Caco-2 (cell line): ENCODE measurements at regions of chr20 and their contacts with region 1.

Region 1: DNA sequence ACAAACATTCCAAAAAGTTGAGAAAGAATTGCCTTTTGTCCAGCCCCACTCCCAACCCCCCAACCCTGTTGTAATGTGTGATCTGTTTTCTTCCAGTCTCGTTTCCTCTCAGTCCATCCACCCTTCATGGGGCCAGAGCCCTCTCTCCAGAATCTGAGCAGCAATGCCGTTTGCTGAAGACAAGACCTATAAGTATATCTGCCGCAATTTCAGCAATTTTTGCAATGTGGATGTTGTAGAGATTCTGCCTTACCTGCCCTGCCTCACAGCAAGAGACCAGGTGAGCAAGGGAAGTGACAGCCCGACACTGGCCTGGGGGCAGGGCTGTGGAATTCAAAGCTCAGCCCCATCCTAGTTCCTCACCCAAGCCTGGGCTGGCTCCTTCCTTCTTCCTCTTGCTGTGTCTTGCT is 7.8 kb downstream of the MAVS start:
- DNase-seq: peak; percentile 72 to 83
- H3K4me3 ChIP-seq: no peak overlapping the region
- H3K4me3 Mint-ChIP-seq: peak overlapping the region; percentile 37
- H3K27ac Mint-ChIP-seq: peak overlapping the region; percentile 84
- H3K4me1 ChIP-seq: peaks cover 4% of the 10 kb centered on the region
- H3K4me1 Mint-ChIP-seq: peaks cover 11% of the 10 kb centered on the region
- H3K27me3 ChIP-seq: no peaks in the 10 kb centered on the region
- H3K27me3 Mint-ChIP-seq: no peaks in the 10 kb centered on the region
- CTCF ChIP-seq: no peak

Region 2: GRCh38 chr20:3786665-3787323 is 67.7 kb before region 1 on chr20 and contains the start of gene CENPB:
- CTCF ChIA-PET with region 1: interaction called, 6 read pairs
- POLR2A ChIA-PET with region 1: no interaction called
- intact Hi-C with region 1: loop called (anchors 5 kb)
- DNase-seq: peak; percentile 86 to 98
- H3K4me3 ChIP-seq: peak within 1 kb of the TSS; percentile 89
- H3K4me3 Mint-ChIP-seq: peak within 1 kb of the TSS; percentile 74
- H3K27ac Mint-ChIP-seq: no peak within 1 kb of the TSS
- H3K4me1 ChIP-seq: peaks cover 29% of the 10 kb centered on the region
- H3K4me1 Mint-ChIP-seq: peaks cover 7% of the 10 kb centered on the region
- H3K27me3 ChIP-seq: no peaks in the 10 kb centered on the region
- H3K27me3 Mint-ChIP-seq: peaks cover 3% of the 10 kb centered on the region
- CTCF ChIP-seq: peak; percentile 66 to 95
- total RNA-seq, gene CENPB: 72.7 and 84.3 TPM in 2 replicates

Region 3: GRCh38 chr20:3866466-3866916 is 12.0 kb after region 1 on chr20:
- CTCF ChIA-PET with region 1: interaction called, 8 read pairs
- POLR2A ChIA-PET with region 1: interaction called, 10 read pairs
- intact Hi-C with region 1: no loop called
- DNase-seq: no peak
- H3K4me3 ChIP-seq: no peak overlapping the region
- H3K4me3 Mint-ChIP-seq: no peak overlapping the region
- H3K27ac Mint-ChIP-seq: peak overlapping the region; percentile 23
- H3K4me1 ChIP-seq: peaks cover 8% of the 10 kb centered on the region; the same call in 1 of the 2 replicates
- H3K4me1 Mint-ChIP-seq: peaks cover 8% of the 10 kb centered on the region
- H3K27me3 ChIP-seq: no peaks in the 10 kb centered on the region
- H3K27me3 Mint-ChIP-seq: no peaks in the 10 kb centered on the region
- CTCF ChIP-seq: no peak

Region 4: GRCh38 chr20:4038047-4038459 is 183.6 kb after region 1 on chr20:
- CTCF ChIA-PET with region 1: no interaction called
- POLR2A ChIA-PET with region 1: no interaction called
- intact Hi-C with region 1: no loop called
- DNase-seq: peak in 1 of 2 experiments; percentile 21
- H3K4me3 ChIP-seq: no peak overlapping the region
- H3K4me3 Mint-ChIP-seq: no peak overlapping the region
- H3K27ac Mint-ChIP-seq: peak overlapping the region; percentile 56
- H3K4me1 ChIP-seq: peaks cover 8% of the 10 kb centered on the region
- H3K4me1 Mint-ChIP-seq: peaks cover 10% of the 10 kb centered on the region
- H3K27me3 ChIP-seq: no peaks in the 10 kb centered on the region
- H3K27me3 Mint-ChIP-seq: no peaks in the 10 kb centered on the region
- CTCF ChIP-seq: no peak